Cardiac septum (tissue), 1 donor: ENCODE measurements at regions of chr1 and their contacts with region 1.

Region 1: GRCh38 chr1:182291584-182292192 is 99.9 kb downstream of the GLUL start:
- DNase-seq: no peak

Region 2: GRCh38 chr1:181898773-181899172 is 392.9 kb before region 1 on chr1:
- intact Hi-C with region 1: no loop called
- DNase-seq: no peak

Region 3: GRCh38 chr1:181985936-181986906 is 305.5 kb before region 1 on chr1:
- intact Hi-C with region 1: no loop called
- DNase-seq: no peak

Region 4: DNA sequence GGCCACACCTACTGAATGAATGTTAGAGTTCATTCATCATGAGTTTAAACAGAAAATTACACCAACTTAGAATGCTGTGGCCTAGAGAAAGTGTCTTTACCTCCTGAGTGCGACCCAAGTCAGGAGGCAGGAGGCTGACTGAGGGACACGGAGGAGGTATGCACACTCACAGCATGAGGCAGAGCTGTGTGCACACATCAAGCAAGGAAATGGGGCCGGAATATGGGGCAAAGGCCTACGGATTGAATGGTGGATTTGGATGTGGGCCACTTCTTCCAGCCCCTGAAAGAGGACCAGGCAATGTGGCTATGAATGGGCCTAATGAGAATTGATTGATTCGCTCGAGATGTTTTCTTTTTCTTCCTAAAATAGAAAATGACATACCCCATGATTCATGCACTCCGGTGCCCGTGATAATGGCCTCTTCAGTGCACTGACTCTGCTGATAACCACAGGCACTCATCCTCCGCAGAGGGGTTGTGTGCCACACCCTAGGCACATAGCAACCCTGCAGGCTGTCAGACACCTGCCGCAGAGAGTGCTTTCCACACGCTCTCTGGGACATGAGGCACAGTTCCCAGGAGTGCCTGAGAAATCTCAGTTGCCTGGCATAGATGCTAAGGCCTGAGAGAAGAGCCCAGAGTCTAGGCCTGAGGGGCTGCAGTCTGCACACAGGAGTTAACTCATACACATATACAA is 55.6 kb before region 1 on chr1:
- intact Hi-C with region 1: loop called (anchors 5 kb)
- DNase-seq: peak; percentile 79

Region 5: DNA sequence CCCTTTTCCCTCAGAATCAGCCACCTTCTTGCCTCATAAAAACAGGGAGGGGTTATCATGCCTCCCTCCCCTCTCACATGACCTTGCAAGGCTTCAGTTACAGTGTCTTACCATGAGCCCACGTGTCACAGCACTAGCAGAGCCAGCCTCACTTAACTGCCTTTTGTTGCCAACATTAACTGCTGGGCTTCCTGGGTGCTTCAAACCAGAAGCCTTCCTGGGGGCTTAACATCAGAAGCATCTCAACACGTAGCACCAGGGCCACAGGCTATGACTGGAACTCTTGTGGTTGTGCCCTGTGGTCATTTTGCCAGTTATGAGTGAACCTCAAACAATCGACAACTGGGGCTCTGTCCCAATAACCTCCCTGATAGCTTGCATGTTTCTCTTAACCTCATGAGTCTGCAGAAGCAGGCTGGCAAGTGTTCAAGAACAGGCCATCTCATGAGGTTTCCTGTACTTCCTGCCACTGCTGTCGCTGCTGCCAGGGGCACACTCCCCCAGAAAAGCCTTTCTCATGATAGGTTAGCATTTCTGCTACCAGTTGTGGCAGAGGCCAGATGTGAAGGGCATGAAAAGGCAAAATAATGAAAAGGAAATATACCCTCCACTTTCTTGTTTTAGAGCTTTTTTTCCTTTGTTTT is 32.3 kb before region 1 on chr1:
- intact Hi-C with region 1: loop called (anchors 5 kb)
- DNase-seq: no peak

Region 6: GRCh38 chr1:182348961-182349747 is 57.5 kb after region 1 on chr1:
- intact Hi-C with region 1: no loop called
- DNase-seq: peak; percentile 78